Sigmoid colon (tissue), 7 donors: ENCODE measurements at regions of chr18 and their contacts with region 1.

Region 1: DNA sequence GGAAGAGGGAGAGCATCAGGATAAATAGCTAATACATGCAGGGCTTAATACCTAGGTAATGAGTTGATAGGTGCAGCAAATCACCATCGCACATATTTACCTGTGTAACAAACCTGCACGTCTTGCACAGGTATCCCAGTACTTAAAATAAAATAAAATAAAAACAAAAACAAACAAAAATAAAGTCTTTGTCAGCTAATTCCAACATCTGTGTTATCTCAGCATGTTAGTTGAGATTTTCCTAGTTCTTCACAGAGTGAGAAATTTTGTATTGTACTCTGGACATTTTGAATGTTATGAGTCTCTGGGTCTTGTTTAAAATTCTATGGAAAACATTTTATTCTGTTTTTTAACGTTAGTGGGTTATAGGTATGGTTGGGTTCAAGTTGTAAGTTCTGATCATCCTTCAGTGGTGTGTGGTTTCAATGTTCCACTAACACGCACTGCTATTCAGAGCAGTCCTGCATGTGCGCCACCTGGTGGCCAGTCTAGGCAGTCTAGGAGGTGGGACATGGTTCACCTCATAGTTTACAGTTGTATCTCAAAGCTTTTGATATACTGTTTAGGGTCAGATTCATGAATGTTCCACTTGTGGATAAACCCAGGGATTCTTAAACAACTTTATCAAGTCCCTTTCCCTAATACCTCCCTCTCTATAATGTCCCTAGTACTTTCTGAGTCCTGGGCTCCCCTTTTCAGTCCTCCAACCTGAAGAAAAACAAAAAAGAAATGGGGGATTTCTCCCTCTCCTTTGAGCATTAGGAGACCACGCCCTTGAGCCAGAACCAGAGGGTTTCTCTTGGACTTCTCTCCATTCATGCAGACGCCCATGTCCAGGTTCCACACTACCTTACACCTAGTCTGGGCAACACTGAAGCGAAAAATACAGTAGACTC is 213.4 kb upstream of the GATA6 start:
- DNase-seq: peak; percentile 79
- H3K4me3 ChIP-seq: no peak overlapping the region
- H3K27ac ChIP-seq: no peak overlapping the region
- H3K4me1 ChIP-seq: peaks cover 0 to 3% (median 0%) of the 10 kb centered on the region in 4 donors
- H3K27me3 ChIP-seq: no peaks in the 10 kb centered on the region
- CTCF ChIP-seq: peak; percentile 38 to 88 (median 70)
- EP300 ChIP-seq: no peak
- POLR2A ChIP-seq: no peak

Region 2: DNA sequence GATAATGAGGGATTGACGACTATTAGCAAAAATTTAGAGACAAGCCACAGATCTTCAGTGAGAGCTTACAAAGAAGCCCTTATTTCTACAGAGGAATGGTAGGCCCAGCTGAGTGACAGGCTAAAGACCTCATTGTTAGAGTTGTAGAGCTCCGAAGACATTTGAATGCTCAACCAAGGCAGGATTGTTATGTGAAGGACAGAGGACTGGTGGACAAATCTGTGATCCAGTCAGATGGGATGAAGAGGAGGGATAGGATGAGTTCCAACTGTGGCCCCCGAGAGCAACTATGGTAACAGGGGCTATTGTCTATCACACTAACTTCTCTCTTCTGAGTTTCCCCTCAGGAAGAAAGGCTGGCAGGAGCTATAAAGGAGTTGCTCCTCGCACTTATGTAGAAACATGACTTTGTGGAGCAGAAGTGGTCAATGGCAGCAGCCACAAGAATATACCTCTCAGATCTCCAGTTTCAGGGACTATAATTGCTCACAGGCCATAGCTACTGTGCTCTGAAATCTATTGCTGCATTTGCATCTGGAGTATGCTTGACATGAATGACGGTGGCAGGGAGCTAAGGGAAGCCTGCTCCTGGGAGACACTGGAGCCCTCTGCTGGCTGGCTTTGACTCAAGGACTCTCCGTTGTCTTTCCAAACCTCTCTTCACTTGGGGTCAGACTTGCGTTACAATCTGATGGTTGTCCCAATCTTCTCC is 764.3 kb before region 1 on chr18:
- intact Hi-C with region 1: loop called (anchors 5 kb)
- DNase-seq: no peak
- H3K4me3 ChIP-seq: no peak overlapping the region
- H3K27ac ChIP-seq: no peak overlapping the region
- H3K4me1 ChIP-seq: no peaks in the 10 kb centered on the region
- H3K27me3 ChIP-seq: no peaks in the 10 kb centered on the region
- CTCF ChIP-seq: peak in 2 of 4 experiments; percentile 20 to 32
- EP300 ChIP-seq: no peak
- POLR2A ChIP-seq: no peak

Region 3: DNA sequence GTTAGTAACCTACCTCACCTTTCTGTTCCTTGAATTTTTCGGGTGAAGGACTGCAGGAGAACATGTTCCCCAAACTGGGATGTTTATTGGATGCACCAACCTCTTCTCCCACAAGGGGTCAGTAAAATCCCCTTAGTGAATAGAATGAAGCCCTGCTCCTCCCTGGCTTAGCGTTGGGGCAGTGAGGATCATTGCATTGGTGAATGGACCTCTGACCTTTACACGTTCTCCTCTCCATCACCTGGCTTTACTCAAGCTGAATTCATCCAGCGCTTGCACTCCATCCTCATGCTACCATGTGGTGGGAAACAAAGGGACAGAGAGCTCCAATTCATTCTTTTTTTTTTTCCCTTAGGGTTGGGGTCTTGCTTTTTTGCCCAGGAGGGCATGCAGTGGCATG is 58.2 kb before region 1 on chr18:
- intact Hi-C with region 1: loop called (anchors 5 kb)
- DNase-seq: no peak
- H3K4me3 ChIP-seq: no peak overlapping the region
- H3K27ac ChIP-seq: no peak overlapping the region
- H3K4me1 ChIP-seq: peaks cover 0 to 13% (median 9%) of the 10 kb centered on the region in 4 donors
- H3K27me3 ChIP-seq: no peaks in the 10 kb centered on the region
- CTCF ChIP-seq: peak; percentile 8 to 60 (median 51)
- EP300 ChIP-seq: no peak
- POLR2A ChIP-seq: no peak

Region 4: DNA sequence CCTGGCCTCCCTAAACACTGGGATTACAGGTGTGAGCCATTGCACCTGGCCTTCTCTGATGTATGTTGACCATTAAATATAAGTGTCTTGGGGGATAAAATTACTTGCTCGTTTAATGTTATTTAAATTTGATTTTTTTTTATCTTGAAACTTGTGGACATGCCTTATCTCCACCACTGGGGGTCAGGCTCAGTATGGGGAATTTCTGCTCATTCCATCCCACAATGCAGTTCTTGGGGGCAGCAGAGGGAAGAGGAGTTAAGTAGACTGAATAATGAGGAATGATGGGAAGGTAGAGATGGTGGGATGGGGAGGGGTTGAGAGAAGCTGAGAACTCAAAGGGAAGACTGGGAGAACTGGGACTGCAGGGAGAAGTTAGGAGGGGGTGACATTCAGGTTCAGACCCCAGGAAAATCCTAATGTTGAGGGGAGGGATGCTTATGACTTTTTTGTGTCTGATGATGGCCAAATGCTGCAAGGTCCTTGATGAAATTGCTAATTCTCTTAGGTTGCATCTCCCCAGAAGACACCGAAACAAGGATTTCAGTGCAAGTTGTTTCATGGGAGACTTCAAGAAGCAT is 41.2 kb before region 1 on chr18:
- intact Hi-C with region 1: loop called (anchors 5 kb)
- DNase-seq: no peak
- H3K4me3 ChIP-seq: no peak overlapping the region
- H3K27ac ChIP-seq: no peak overlapping the region
- H3K4me1 ChIP-seq: no peaks in the 10 kb centered on the region
- H3K27me3 ChIP-seq: no peaks in the 10 kb centered on the region
- CTCF ChIP-seq: peak in 2 of 4 experiments; percentile 36 to 39
- EP300 ChIP-seq: no peak
- POLR2A ChIP-seq: no peak

Region 5: GRCh38 chr18:22563098-22563707 is 607.2 kb after region 1 on chr18:
- intact Hi-C with region 1: loop called (anchors 5 kb)
- DNase-seq: no peak
- H3K4me3 ChIP-seq: no peak overlapping the region
- H3K27ac ChIP-seq: no peak overlapping the region
- H3K4me1 ChIP-seq: peaks cover 0 to 23% (median 9%) of the 10 kb centered on the region in 4 donors
- H3K27me3 ChIP-seq: no peaks in the 10 kb centered on the region
- CTCF ChIP-seq: peak in 3 of 4 experiments; percentile 65 to 76 (median 68)
- EP300 ChIP-seq: no peak
- POLR2A ChIP-seq: no peak